ENCODE measurements at regions of chr5 and their contacts with region 1.

Region 1: DNA sequence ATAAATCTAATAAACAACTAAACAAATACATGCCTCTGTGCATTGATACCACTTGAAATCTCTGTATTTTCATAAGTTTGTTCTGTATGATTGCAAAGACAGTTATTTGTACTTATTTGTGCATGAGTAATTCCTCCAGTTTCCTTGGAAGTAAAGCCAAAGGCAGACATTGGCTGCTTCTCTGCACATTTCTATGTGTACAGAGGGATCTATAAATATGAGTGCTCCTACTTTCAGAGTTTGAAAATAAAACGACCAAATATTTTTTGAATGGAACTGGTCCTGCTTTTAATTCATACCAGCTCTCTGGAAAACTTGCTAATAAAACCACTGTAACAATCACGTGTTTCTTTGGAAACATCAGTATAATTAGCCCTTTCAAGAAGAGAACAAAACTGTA is 306.5 kb downstream of the MAN2A1 start:
- DNase-seq: no peak
- ATAC-seq: no peak
- H3K4me3 ChIP-seq: no peak overlapping the region
- H3K27ac ChIP-seq: no peak overlapping the region
- H3K4me1 ChIP-seq: peaks cover 59% of the 10 kb centered on the region
- H3K27me3 ChIP-seq: no peaks in the 10 kb centered on the region
- CTCF ChIP-seq: no peak
- EP300 ChIP-seq: no peak
- POLR2A ChIP-seq: no peak
- RAD21 ChIP-seq: no peak

Region 2: GRCh38 chr5:109907731-109908130 is 88.5 kb before region 1 on chr5:
- CTCF ChIA-PET with region 1: no interaction called
- POLR2A ChIA-PET with region 1: no interaction called
- in situ Hi-C with region 1: loop called (anchors 10 kb)
- intact Hi-C with region 1: no loop called
- DNase-seq: no peak
- ATAC-seq: no peak
- H3K4me3 ChIP-seq: no peak overlapping the region
- H3K27ac ChIP-seq: no peak overlapping the region
- H3K4me1 ChIP-seq: peaks cover 50% of the 10 kb centered on the region
- H3K27me3 ChIP-seq: no peaks in the 10 kb centered on the region
- CTCF ChIP-seq: no peak
- EP300 ChIP-seq: no peak
- POLR2A ChIP-seq: no peak
- RAD21 ChIP-seq: no peak